ENCODE measurements at regions of chrX and their contacts with region 1.

Region 1: DNA sequence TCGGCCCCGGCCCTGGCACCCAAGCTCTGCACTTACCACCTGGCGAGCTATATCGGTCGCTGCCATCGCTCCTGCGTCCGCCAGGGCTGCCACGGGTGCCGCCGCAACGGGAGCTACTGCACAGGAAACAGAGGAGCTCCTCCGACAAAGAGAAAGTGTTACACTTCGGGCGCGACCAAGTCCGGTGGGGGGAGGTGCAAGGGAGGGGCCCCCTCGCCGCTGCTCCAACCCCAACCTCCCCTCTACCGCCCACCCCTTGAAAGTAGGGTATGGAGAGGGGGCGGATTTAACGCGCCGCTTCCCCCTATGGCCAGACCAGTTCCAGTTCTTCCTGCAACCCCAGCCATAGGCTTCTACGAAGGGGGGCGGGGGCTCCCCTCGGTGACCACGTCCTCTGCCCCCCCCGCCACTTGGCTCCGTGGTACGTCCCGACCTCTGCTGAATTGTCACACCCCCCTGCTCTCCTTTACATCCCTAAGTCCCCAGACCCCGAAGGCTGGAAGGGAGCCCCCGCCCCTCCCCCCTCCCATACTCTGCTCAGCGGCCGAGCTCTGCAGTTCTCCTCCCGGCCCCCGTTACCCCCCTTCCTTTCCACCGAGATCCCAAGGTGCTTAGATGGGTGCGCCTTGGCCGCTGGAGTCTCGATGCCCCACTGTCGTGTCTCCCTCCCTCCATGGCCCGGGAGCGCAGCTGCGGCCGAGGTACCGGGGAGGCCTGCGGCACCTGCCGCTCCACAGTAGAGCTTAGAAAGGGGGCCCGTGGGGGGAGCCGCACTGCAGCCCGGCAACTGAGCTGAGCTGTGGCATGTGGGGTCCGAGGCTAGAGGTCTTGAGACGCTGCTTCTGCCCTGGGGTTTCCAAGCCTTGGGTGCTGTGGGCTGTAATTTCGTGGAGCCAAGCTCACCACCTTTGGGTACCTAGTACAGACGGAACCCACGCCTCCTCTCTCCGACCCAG is at the start of gene SEPTIN6:
- DNase-seq: peak; percentile 94
- H3K4me3 Mint-ChIP-seq: peak within 1 kb of the TSS; percentile 96
- H3K27ac Mint-ChIP-seq: peak within 1 kb of the TSS; percentile 99
- H3K4me1 Mint-ChIP-seq: peaks cover 4% of the 10 kb centered on the region
- H3K27me3 Mint-ChIP-seq: no peaks in the 10 kb centered on the region
- total RNA-seq, gene SEPTIN6: 151 and 153 TPM in 2 replicates

Region 2: GRCh38 chrX:119606280-119607015 is 86.9 kb before region 1 on chrX and contains the start of gene NKRF:
- intact Hi-C with region 1: no loop called
- DNase-seq: peak; percentile 96
- H3K4me3 Mint-ChIP-seq: peak within 1 kb of the TSS; percentile 99
- H3K27ac Mint-ChIP-seq: peak within 1 kb of the TSS; percentile 95
- H3K4me1 Mint-ChIP-seq: peaks cover 20% of the 10 kb centered on the region
- H3K27me3 Mint-ChIP-seq: no peaks in the 10 kb centered on the region
- total RNA-seq, gene NKRF: 28.0 and 29.8 TPM in 2 replicates

Region 3: GRCh38 chrX:119636419-119636818 is 56.9 kb before region 1 on chrX:
- intact Hi-C with region 1: no loop called
- DNase-seq: no peak
- H3K4me3 Mint-ChIP-seq: no peak overlapping the region
- H3K27ac Mint-ChIP-seq: no peak overlapping the region
- H3K4me1 Mint-ChIP-seq: peaks cover 17% of the 10 kb centered on the region
- H3K27me3 Mint-ChIP-seq: no peaks in the 10 kb centered on the region

Region 4: GRCh38 chrX:119647552-119648420 is 45.5 kb before region 1 on chrX:
- intact Hi-C with region 1: loop called (anchors 1 kb)
- DNase-seq: peak; percentile 84
- H3K4me3 Mint-ChIP-seq: peak overlapping the region; percentile 54
- H3K27ac Mint-ChIP-seq: peak overlapping the region; percentile 94
- H3K4me1 Mint-ChIP-seq: peaks cover 18% of the 10 kb centered on the region
- H3K27me3 Mint-ChIP-seq: no peaks in the 10 kb centered on the region

Region 5: GRCh38 chrX:119655125-119655524 is 38.2 kb before region 1 on chrX:
- intact Hi-C with region 1: loop called (anchors 1 kb)
- DNase-seq: peak; percentile 80
- H3K4me3 Mint-ChIP-seq: peak overlapping the region; percentile 66
- H3K27ac Mint-ChIP-seq: peak overlapping the region; percentile 94
- H3K4me1 Mint-ChIP-seq: peaks cover 33% of the 10 kb centered on the region
- H3K27me3 Mint-ChIP-seq: no peaks in the 10 kb centered on the region

Region 6: DNA sequence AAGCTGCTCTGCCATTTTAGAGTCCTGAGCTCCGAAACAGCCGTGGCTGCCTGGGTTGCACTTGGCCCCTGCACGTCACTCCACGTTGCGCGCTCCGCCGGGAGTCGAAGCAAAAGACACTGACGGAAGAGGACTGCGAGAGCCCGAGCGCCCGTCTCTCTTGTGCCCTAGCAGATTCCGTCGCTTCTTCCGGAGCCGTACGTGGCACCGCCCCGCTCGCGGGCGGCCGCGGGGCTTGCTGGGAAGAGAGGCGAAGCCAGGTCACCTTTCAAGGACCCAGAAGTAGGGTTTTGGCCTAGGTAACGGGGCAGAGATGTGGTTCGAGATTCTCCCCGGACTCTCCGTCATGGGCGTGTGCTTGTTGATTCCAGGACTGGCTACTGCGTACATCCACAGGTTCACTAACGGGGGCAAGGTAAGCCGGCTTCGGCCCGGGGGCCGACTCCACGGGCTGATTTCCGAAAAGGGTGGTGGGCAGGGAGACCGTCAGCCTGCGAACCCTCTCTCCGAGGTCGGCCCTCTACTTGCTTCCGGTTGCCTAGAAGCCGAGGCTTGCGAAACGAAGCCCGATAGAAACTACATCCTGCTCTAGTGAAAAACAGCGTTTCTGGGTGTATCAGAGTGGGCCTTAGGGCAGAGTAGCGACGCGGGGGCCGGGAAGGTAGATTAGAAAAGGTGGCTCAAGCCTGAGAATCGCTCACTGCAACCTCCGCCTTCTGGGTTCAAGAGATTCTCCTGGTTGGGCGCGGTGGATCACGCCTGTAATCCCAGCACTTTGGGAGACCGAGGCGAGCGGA is 178.5 kb after region 1 on chrX and contains the starts of genes NDUFA1 and RNF113A:
- intact Hi-C with region 1: loop called (anchors 2 kb)
- DNase-seq: peak; percentile 96
- H3K4me3 Mint-ChIP-seq: peak within 1 kb of the TSS; percentile 98
- H3K27ac Mint-ChIP-seq: peak within 1 kb of the TSS; percentile 99
- H3K4me1 Mint-ChIP-seq: peaks cover 5% of the 10 kb centered on the region
- H3K27me3 Mint-ChIP-seq: no peaks in the 10 kb centered on the region
- total RNA-seq, gene NDUFA1: 75.1 and 79.0 TPM in 2 replicates
- total RNA-seq, gene RNF113A: 25.2 and 26.7 TPM in 2 replicates